ENCODE measurements at regions of chr6 and their contacts with region 1.

Region 1: DNA sequence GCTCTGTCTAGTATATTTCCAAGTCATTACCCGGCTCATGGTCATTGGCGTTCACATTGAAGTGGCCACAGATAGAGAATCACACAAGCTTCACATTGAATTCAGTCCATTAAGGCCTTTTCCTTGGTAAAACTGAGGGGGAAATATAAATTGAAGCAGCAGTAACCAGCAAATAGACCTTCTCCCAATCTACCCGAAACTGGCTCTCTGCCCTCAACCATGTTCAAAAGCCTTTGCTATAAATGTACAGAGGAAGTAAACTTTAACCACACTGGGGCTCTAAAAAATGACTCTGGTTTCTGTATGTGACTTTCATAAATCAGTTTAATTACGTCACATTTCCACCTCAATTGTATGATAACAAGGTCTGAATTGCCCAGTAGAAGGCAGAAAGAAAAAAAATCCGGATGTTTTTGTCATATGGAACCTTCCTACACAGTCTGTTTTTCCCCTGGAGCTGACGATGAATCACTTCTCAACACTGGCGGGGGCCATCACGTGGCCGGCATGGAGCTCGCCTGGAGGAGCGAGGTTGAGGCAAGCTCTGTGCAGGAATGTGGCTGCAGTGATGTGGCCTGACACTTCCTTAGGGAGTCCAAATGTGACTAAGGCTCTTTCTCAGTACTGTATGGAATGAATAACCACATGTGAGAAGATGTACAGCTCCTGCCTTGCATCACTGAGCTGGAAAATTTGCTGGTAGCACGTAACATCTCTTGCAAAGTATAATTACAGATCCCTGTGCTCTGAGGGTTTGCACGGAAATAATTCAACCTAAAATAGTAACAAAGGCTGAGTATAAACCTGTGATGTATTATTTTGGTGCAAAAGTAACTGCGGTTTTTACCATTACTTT is 58.6 kb upstream of the SNX9 start:
- DNase-seq: peak; percentile 85
- H3K4me3 Mint-ChIP-seq: peak overlapping the region; percentile 43
- H3K27ac Mint-ChIP-seq: peak overlapping the region; percentile 97
- H3K4me1 Mint-ChIP-seq: peaks cover 49% of the 10 kb centered on the region
- H3K27me3 Mint-ChIP-seq: no peaks in the 10 kb centered on the region
- CTCF ChIP-seq: no peak

Region 2: DNA sequence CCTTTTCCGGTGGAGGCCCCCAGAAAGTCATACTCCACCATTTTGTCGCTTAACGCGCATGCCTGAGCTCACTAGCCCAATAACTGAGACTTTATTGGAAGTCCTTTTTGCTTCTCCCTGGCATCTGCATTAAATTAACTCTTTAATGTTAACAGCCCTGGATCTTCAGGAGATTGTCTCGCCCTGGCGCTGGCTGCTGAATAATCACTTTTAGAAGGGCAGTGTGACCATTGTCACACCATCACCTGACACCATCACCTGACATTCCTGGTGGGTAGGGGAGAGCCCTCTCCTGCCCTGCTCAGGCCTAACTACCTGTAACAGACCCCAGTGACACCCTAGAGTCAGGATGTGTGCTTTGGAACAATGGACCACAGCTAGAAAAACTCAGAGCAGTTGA is 56.8 kb before region 1 on chr6:
- CTCF ChIA-PET with region 1: interaction called, 11 read pairs
- intact Hi-C with region 1: no loop called
- DNase-seq: no peak
- H3K4me3 Mint-ChIP-seq: no peak overlapping the region
- H3K27ac Mint-ChIP-seq: no peak overlapping the region
- H3K4me1 Mint-ChIP-seq: no peaks in the 10 kb centered on the region
- H3K27me3 Mint-ChIP-seq: peaks cover 20% of the 10 kb centered on the region
- CTCF ChIP-seq: no peak

Region 3: DNA sequence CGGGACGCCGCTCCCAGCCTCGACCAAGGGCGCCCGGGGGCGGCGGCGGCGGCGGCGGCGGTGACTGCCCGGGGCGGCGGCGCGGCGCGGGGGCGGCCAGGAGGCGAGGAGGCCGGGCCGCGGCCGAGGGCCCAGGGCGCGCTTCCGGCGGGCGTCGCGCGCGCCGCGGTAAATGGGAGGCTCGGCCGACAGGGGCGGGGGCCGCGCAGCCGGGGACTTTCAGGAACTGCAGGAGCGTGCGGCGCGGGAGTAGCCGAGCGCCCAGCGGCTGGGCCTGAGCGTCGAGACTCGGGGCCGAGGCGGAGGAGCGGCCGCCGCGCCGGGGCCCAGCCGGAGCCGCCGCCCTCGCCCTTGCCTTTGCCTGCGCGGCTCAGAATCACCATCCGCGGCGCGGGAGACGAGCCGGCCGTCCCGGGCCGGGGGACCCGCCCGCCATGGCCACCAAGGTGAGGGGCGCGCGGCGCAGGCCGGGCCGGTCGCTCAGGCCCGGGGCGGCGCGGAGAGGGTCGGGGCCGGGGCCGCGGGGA is 58.7 kb after region 1 on chr6 and contains the start of gene SNX9:
- CTCF ChIA-PET with region 1: no interaction called
- intact Hi-C with region 1: loop called (anchors 5 kb)
- DNase-seq: peak; percentile 69
- H3K4me3 Mint-ChIP-seq: peak within 1 kb of the TSS; percentile 82
- H3K27ac Mint-ChIP-seq: peak within 1 kb of the TSS; percentile 96
- H3K4me1 Mint-ChIP-seq: no peaks in the 10 kb centered on the region
- H3K27me3 Mint-ChIP-seq: no peaks in the 10 kb centered on the region
- CTCF ChIP-seq: no peak
- total RNA-seq, gene SNX9: 16.6 and 17.7 TPM in 2 replicates

Region 4: GRCh38 chr6:157873735-157874344 is 109.4 kb after region 1 on chr6:
- CTCF ChIA-PET with region 1: interaction called, 16 read pairs
- intact Hi-C with region 1: loop called (anchors 5 kb)
- DNase-seq: peak; percentile 85
- H3K4me3 Mint-ChIP-seq: no peak overlapping the region
- H3K27ac Mint-ChIP-seq: no peak overlapping the region
- H3K4me1 Mint-ChIP-seq: no peaks in the 10 kb centered on the region
- H3K27me3 Mint-ChIP-seq: no peaks in the 10 kb centered on the region
- CTCF ChIP-seq: peak; percentile 73

Measured in Calu3 (cell line).